Naive thymus-derived CD4-positive, alpha-beta T cell (primary cell): ENCODE measurements at regions of chrX and their contacts with region 1.

Region 1: DNA sequence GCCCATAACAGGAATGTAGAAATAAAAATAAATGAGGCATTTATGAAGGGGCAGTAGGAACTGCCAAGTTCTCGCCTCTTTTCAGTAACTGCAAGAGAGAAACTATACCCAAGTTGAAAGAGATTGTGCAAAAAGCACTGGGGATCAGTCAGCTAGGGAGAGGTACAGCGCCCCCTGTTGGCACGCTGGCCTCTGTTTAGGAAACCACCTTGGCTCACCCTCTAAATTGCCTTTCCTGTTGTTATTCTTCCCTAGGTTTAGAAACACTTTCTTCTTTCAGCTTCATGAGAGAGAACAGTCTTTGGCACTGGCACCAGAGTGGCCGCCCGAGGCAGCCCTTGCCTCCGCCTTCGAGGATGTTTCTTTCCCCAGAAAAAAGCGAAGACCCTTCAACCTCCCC is 348.5 kb downstream of the MID1IP1 start:
- DNase-seq: peak; percentile 14 to 59 (median 46)
- ATAC-seq: peak; percentile 61
- H3K4me3 ChIP-seq: no peak overlapping the region
- H3K4me3 Mint-ChIP-seq: no peak overlapping the region
- H3K27ac ChIP-seq: no peak overlapping the region
- H3K27ac Mint-ChIP-seq: no peak overlapping the region
- H3K4me1 ChIP-seq: no peaks in the 10 kb centered on the region
- H3K4me1 Mint-ChIP-seq: no peaks in the 10 kb centered on the region
- H3K27me3 ChIP-seq: no peaks in the 10 kb centered on the region
- H3K27me3 Mint-ChIP-seq: no peaks in the 10 kb centered on the region

Region 2: GRCh38 chrX:38664285-38664684 is 485.5 kb before region 1 on chrX:
- CTCF ChIA-PET with region 1: no interaction called
- POLR2A ChIA-PET with region 1: no interaction called
- intact Hi-C with region 1: loop called in 1 of 2 experiments (anchors 10 kb)
- DNase-seq: peak in 1 of 9 donors; percentile 1
- ATAC-seq: no peak
- H3K4me3 ChIP-seq: no peak overlapping the region
- H3K4me3 Mint-ChIP-seq: no peak overlapping the region
- H3K27ac ChIP-seq: no peak overlapping the region
- H3K27ac Mint-ChIP-seq: no peak overlapping the region
- H3K4me1 ChIP-seq: no peaks in the 10 kb centered on the region
- H3K4me1 Mint-ChIP-seq: peaks cover 0 to under 1% (median under 1%) of the 10 kb centered on the region in 7 donors
- H3K27me3 ChIP-seq: no peaks in the 10 kb centered on the region
- H3K27me3 Mint-ChIP-seq: no peaks in the 10 kb centered on the region

Region 3: DNA sequence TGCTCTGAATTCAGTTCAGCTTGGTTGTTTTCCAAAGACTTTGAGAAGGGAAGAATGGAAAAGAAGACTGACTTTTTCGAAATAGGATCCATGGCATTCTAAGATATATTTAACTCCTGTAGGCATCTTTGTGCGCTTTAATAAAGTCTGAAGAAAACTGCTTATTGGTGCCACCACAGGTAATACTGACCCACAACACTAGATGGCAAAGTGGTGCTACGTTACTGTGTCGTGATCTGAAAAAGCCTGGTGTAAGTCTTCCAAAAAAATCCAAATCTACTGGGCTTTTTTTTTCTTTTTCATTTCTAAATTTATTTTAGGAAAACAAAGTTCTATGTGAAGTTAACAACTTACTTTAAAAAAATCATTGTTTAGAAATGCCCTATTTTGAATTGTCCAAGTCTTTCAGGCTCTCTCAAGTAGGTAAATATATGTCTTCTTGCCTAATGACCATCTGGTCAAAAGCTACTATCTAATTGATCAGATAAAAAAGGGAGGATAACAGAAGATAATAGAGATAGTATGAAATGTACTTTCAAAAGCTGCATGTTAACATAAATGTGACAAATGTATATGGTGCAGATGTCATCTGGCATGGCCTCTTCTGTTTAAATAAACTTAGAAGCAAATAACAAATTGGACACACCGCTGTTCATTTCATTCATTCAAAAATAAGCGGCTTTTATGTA is 395.5 kb before region 1 on chrX:
- CTCF ChIA-PET with region 1: interaction called, 6 read pairs
- POLR2A ChIA-PET with region 1: no interaction called
- intact Hi-C with region 1: loop called (anchors 1 kb)
- DNase-seq: peak in 6 of 9 donors; percentile 1 to 40 (median 32)
- ATAC-seq: peak; percentile 65
- H3K4me3 ChIP-seq: no peak overlapping the region
- H3K4me3 Mint-ChIP-seq: no peak overlapping the region
- H3K27ac ChIP-seq: no peak overlapping the region
- H3K27ac Mint-ChIP-seq: no peak overlapping the region
- H3K4me1 ChIP-seq: no peaks in the 10 kb centered on the region
- H3K4me1 Mint-ChIP-seq: no peaks in the 10 kb centered on the region
- H3K27me3 ChIP-seq: no peaks in the 10 kb centered on the region
- H3K27me3 Mint-ChIP-seq: no peaks in the 10 kb centered on the region

Region 4: DNA sequence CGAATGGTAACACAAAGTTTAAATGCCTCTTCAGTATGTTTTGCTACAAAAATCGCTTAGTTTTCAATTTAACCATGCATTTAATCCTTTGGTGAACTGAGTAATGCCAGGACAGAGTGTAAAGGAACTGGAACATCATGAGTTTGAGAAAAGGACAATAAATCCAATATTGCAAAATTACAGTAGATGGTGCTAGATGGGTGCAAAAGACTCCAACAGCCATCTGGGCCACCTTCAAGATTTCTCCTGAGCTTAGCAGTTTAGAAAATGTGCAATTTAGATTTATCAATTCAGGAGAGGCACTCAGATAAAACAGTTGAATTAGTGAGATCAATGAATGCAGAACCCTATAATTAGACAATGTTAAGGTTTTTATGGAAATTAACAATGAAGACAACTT is 381.7 kb before region 1 on chrX:
- CTCF ChIA-PET with region 1: interaction called, 9 read pairs
- POLR2A ChIA-PET with region 1: no interaction called
- intact Hi-C with region 1: loop called (anchors 1 kb)
- DNase-seq: peak in 5 of 9 donors; percentile 8 to 40 (median 19)
- ATAC-seq: no peak
- H3K4me3 ChIP-seq: no peak overlapping the region
- H3K4me3 Mint-ChIP-seq: no peak overlapping the region
- H3K27ac ChIP-seq: no peak overlapping the region
- H3K27ac Mint-ChIP-seq: no peak overlapping the region
- H3K4me1 ChIP-seq: no peaks in the 10 kb centered on the region
- H3K4me1 Mint-ChIP-seq: no peaks in the 10 kb centered on the region
- H3K27me3 ChIP-seq: no peaks in the 10 kb centered on the region
- H3K27me3 Mint-ChIP-seq: peaks cover 0 to 4% (median 0%) of the 10 kb centered on the region in 5 donors